ENCODE measurements at regions of chr12 and their contacts with region 1.

Region 1: DNA sequence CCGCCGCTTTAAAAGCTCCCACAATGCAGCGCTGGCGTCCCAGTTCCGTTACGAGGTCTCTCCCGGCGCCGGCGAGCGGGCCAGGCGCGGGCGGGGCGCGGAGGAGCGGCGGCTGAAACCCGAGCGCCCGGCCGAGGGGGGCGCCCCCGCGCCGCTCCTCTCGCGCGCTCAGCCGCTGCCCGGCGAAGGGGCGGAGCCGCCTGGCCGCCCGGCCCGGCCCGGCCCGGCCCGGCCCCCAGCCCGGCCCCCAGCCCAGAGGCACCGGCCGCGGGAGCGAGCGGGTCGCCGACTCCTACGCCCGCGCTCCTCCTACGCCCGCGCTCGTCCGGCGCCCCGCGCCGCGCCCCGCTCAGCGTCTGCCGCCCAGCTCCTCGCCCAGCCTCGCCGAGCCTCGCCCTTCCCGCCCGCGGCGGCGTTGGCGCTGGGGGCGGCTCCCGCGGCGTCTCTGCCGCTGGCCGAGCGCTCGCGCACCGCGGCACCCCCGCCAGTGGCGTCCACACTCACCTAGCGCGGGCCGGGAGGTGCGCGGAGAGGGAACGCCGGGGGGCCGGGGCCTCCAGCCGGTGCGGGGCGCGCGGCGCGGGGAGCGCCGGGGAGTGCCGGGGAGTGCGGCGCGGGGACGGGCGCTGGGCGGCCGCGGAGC is at the start of gene RASSF8:
- DNase-seq: peak; percentile 72
- ATAC-seq: peak; percentile 94
- H3K4me3 ChIP-seq: peak within 1 kb of the TSS; percentile 94
- H3K27ac ChIP-seq: peak within 1 kb of the TSS; percentile 100
- H3K4me1 ChIP-seq: peaks cover 3% of the 10 kb centered on the region
- H3K27me3 ChIP-seq: no peaks in the 10 kb centered on the region
- CTCF ChIP-seq: no peak
- POLR2A ChIP-seq: peak; percentile 65
- RAD21 ChIP-seq: no peak
- total RNA-seq, gene RASSF8: 50.5 and 50.8 TPM in 2 replicates

Region 2: GRCh38 chr12:25436203-25437030 is 522.1 kb before region 1 on chr12:
- CTCF ChIA-PET with region 1: interaction called, 3 read pairs
- POLR2A ChIA-PET with region 1: interaction called, 5 read pairs
- dilution Hi-C with region 1: no loop called
- in situ Hi-C with region 1: no loop called
- intact Hi-C with region 1: loop called (anchors 2 kb)
- DNase-seq: peak; percentile 89
- ATAC-seq: peak; percentile 40
- H3K4me3 ChIP-seq: peak overlapping the region; percentile 21; the same call in 1 of the 2 replicates
- H3K27ac ChIP-seq: peak overlapping the region; percentile 75
- H3K4me1 ChIP-seq: peaks cover 17% of the 10 kb centered on the region
- H3K27me3 ChIP-seq: no peaks in the 10 kb centered on the region
- CTCF ChIP-seq: peak; percentile 93
- POLR2A ChIP-seq: peak; percentile 29; the same call in 1 of the 2 replicates
- RAD21 ChIP-seq: peak; percentile 92

Region 3: GRCh38 chr12:25648460-25648859 is 310.1 kb before region 1 on chr12:
- CTCF ChIA-PET with region 1: no interaction called
- POLR2A ChIA-PET with region 1: no interaction called
- dilution Hi-C with region 1: no loop called
- in situ Hi-C with region 1: no loop called
- intact Hi-C with region 1: loop called (anchors 10 kb)
- DNase-seq: peak; percentile 73
- ATAC-seq: peak; percentile 97
- H3K4me3 ChIP-seq: peak overlapping the region; percentile 22
- H3K27ac ChIP-seq: peak overlapping the region; percentile 38
- H3K4me1 ChIP-seq: no peaks in the 10 kb centered on the region
- H3K27me3 ChIP-seq: no peaks in the 10 kb centered on the region
- CTCF ChIP-seq: no peak
- POLR2A ChIP-seq: no peak
- RAD21 ChIP-seq: no peak

Region 4: DNA sequence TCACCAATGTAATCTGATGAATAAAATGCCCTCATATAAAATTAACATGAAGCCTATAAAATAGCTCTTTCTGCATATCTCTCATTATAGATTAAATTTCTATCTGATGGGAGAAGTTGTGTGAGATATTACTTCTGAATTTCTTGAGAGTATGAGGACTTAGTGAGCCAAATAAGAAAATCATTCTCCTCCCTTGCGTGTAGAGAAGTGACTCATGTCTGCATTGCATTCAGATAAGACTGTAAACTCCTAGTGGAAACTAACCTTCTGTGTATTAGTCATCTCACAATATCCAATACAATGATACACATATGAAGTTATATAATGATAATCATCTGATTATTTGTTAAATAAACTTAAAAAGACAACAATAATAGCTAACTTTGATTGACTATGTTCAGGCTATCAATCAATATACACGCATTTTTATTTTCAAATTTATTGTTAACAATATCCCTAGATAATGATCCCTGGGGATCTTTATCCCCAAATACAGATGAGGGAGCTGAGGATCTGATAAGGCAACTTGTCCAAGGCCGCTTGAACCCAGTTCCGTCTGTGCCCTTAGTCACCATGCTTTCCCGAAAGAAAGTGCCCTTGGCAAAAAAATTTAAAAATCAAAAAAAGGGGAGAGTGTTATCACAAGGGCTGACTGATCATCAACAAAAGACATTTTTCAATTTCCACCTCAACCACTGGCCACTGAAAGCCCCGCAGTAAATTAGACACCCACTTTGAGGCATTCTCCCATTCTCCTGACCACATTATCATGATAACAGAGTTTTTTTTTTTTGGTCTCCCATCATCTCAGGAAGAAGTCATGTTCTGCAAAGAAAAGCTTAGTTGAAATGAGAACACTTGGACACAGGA is 189.2 kb before region 1 on chr12:
- CTCF ChIA-PET with region 1: no interaction called
- POLR2A ChIA-PET with region 1: no interaction called
- dilution Hi-C with region 1: no loop called
- in situ Hi-C with region 1: no loop called
- intact Hi-C with region 1: loop called (anchors 5 kb)
- DNase-seq: peak; percentile 93
- ATAC-seq: peak; percentile 86
- H3K4me3 ChIP-seq: no peak overlapping the region
- H3K27ac ChIP-seq: no peak overlapping the region
- H3K4me1 ChIP-seq: peaks cover 10% of the 10 kb centered on the region
- H3K27me3 ChIP-seq: no peaks in the 10 kb centered on the region
- CTCF ChIP-seq: no peak
- POLR2A ChIP-seq: no peak
- RAD21 ChIP-seq: no peak

Region 5: DNA sequence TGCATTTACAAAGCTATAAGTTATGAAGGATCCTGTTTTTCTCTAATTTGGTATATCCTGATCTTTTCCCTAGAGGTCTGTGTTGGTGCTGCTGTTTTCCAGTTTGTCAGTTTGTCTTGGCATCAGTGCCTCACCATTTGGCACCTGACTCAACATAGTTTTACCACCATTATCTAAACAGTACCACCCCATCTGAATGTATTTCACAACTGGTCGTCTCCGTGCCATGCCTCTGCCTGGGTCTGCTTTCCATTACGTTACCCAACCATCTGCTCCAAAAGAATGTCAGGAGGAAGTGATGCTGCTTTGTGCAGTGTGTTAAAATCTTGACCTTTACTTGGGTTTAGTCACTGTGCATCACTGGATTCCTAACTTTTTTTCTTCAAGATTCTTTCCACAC is 129.4 kb before region 1 on chr12:
- CTCF ChIA-PET with region 1: no interaction called
- POLR2A ChIA-PET with region 1: no interaction called
- dilution Hi-C with region 1: no loop called
- in situ Hi-C with region 1: no loop called
- intact Hi-C with region 1: loop called (anchors 1 kb)
- DNase-seq: peak; percentile 98
- ATAC-seq: peak; percentile 82
- H3K4me3 ChIP-seq: no peak overlapping the region
- H3K27ac ChIP-seq: 0 out of 2 replicates have a peak overlapping the region, but pooled peaks have one; percentile 2
- H3K4me1 ChIP-seq: peaks cover 16% of the 10 kb centered on the region
- H3K27me3 ChIP-seq: no peaks in the 10 kb centered on the region
- CTCF ChIP-seq: 0 out of 2 replicates have a peak, but pooled peaks have one; percentile 10
- POLR2A ChIP-seq: no peak
- RAD21 ChIP-seq: peak; percentile 38

Region 6: GRCh38 chr12:25852791-25853190 is 105.8 kb before region 1 on chr12:
- CTCF ChIA-PET with region 1: no interaction called
- POLR2A ChIA-PET with region 1: no interaction called
- dilution Hi-C with region 1: no loop called
- in situ Hi-C with region 1: no loop called
- intact Hi-C with region 1: loop called (anchors 1 kb)
- DNase-seq: peak; percentile 95
- ATAC-seq: peak; percentile 91
- H3K4me3 ChIP-seq: no peak overlapping the region
- H3K27ac ChIP-seq: no peak overlapping the region
- H3K4me1 ChIP-seq: peaks cover 9% of the 10 kb centered on the region
- H3K27me3 ChIP-seq: no peaks in the 10 kb centered on the region; the same call in 1 of the 2 replicates
- CTCF ChIP-seq: no peak
- POLR2A ChIP-seq: no peak
- RAD21 ChIP-seq: 0 out of 2 replicates have a peak, but pooled peaks have one; percentile 5

Region 7: DNA sequence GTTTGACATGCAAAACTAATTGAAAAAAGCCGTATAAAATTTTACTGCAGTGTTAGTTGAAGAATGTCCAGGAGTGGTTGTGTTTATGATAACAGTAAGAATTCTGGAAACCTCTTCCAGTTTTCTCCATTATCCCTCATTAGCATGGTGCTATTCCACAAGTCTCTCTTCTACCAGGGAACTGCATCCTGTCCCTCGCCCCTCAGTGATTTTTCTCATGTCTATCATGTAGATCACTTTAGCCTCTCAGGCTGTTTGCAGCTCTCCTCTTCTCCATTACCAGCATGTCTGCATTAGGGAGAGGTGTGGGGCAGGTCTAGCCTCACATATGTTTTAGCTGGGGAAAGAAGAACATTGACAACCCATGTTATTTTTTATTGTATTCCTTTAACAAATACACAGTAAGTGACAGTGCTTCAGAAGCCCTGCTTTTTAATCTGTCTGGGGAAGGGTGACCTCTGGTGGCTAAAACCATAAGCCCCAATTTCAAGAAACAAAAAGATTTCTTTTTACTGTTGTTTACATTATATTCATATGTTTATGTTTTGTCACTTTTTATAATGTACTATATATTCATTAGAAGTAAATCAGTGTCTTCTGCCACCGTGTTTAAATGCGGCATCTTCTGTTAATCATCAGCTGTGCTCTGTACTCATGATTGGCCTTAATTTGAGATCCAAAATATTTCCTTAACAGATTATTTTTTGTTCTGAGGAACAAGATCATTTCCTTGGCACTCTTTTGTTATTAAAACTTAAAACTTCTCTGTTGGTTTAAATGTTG is 70.6 kb after region 1 on chr12:
- CTCF ChIA-PET with region 1: no interaction called
- POLR2A ChIA-PET with region 1: no interaction called
- dilution Hi-C with region 1: no loop called
- in situ Hi-C with region 1: no loop called
- intact Hi-C with region 1: loop called (anchors 1 kb)
- DNase-seq: peak; percentile 67
- ATAC-seq: peak; percentile 75
- H3K4me3 ChIP-seq: no peak overlapping the region
- H3K27ac ChIP-seq: no peak overlapping the region
- H3K4me1 ChIP-seq: peaks cover 9% of the 10 kb centered on the region
- H3K27me3 ChIP-seq: no peaks in the 10 kb centered on the region
- CTCF ChIP-seq: peak; percentile 84
- POLR2A ChIP-seq: no peak
- RAD21 ChIP-seq: peak; percentile 82